ENCODE measurements at regions of chr1 and their contacts with region 1.

Region 1: DNA sequence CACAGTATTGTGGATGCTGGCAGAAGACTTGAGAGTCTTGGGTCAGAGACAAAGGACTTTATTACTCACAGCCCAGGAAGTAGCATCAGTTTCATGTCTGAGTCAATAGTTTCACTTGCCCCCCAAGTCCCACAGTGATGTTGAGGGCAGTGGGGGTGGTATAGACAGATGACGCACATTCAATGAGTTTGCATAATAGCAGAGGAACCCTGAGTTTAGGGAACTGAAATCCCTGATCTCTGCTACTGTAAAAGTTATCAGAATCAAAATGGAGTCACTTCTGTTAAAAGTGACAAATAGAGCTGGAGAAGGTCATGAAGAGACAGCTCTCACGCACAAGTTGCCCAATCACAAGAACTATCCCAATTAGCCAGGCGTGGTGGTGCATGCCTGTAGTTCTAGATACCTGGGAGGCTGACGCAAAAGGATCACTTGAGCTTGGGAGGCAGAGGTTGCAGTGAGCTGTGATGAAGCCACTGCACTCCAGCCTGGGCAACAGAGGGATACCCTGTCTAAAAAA is 11.5 kb upstream of the HCRTR1 start:
- DNase-seq: no peak
- H3K4me3 ChIP-seq: no peak overlapping the region
- CTCF ChIP-seq: no peak

Region 2: DNA sequence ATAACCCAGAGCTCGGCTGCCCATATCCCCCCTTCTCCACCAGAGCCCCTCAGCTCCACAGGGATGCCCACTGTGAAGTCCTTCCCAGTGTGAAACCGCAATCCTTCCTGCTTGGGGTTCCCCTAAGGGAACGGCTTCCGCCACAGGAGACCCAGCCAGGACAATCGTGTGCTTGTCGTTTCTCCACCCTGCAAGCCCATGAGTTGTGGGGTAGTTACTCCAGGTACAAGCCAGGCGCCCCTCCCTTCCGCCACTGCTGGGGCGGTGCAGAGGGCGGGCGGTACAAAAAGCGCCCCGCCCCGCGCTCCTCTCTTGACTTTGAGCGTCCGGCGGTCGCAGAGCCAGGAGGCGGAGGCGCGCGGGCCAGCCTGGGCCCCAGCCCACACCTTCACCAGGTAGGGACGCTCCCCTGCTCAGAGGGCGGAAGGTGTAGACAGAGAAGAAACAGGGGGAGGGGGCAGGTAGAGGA is 29.7 kb before region 1 on chr1 and contains the start of gene TINAGL1:
- CTCF ChIA-PET with region 1: no interaction called
- POLR2A ChIA-PET with region 1: no interaction called
- DNase-seq: no peak
- H3K4me3 ChIP-seq: peak within 1 kb of the TSS; percentile 47
- CTCF ChIP-seq: no peak

Region 3: GRCh38 chr1:31593770-31594632 is 12.0 kb before region 1 on chr1:
- CTCF ChIA-PET with region 1: interaction called, 118 read pairs
- POLR2A ChIA-PET with region 1: interaction called, 3 read pairs
- DNase-seq: no peak
- H3K4me3 ChIP-seq: no peak overlapping the region
- CTCF ChIP-seq: peak; percentile 97

Region 4: DNA sequence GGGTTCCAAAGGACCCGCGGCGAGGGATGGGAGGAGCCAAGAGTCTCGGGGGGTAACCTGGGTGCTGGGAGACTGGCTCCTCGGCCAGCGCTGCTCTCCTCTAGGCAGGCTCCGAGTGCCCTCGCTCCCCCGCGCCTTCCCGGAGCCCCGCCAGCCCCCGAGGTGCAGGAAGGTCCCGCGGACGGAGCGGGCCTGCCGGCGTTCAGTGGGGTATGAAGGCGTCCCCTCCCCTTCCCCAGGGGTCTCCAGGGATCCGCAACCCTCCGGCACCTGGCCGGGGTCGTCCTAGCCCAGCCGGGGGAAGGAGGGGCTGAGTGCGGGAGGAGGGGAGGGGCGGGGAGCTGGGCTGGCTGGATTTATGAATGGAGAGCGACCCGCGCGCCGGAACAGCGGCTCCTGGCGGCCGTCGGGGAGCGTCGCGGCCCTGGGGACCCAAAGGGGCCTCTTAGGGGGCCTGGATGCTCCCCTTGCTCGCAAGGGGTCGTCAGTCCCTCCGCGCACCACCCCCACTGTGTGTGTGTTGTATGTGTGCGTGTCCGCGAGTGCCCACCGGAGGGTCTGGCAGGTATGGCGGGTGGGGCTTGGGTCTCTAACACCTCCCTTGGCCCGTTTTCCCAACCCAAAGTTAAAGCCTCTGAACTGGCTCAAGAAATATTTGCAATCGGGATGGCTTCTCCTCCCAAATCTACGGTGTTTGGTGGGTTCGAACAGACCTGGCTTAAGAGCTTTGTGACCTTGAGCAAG is 12.1 kb after region 1 on chr1:
- CTCF ChIA-PET with region 1: interaction called, 57 read pairs
- POLR2A ChIA-PET with region 1: no interaction called
- DNase-seq: no peak
- H3K4me3 ChIP-seq: peak overlapping the region; percentile 54
- CTCF ChIP-seq: peak; percentile 87

Region 5: DNA sequence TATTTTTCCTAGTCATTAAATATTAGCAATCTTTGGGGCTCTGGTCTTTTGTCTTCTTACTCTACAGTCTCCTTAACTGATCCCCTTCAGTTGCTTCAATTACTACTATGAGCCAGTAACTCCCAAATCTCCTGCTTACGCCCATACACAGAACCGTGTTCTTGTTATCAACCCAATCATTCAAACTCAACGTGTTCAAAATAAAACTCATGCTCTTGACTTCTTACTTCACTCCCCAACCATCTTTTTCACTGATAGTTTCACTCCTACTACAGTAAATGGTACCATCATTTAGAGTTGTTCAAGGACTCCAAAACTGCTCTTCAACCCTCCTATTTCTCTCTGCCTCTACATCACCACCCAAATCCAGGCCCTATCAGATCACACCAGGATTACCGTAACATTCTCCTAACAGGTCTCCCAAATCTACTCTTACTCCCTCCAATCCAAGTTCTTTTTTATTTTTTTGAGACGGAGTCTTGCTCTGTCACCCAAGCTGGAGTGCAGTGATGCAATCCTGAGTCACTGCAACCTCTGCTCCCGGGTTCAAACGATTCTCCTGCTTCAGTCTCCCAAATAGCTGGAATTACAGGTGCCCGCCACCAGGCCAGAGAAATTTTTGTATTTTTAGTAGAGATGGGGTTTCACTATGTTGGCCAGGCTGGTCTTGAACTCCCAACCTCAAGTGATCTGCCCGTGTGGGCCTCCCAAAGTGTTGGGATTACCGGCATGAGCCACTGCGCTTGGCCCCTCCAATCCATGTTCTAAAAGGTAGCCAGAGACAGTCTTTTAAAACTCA is 1208.2 kb after region 1 on chr1:
- CTCF ChIA-PET with region 1: no interaction called
- POLR2A ChIA-PET with region 1: no interaction called
- DNase-seq: no peak
- H3K4me3 ChIP-seq: no peak overlapping the region
- CTCF ChIP-seq: no peak